Tibial artery (tissue), 4 donors: ENCODE measurements at regions of chr7 and their contacts with region 1.

Region 1: DNA sequence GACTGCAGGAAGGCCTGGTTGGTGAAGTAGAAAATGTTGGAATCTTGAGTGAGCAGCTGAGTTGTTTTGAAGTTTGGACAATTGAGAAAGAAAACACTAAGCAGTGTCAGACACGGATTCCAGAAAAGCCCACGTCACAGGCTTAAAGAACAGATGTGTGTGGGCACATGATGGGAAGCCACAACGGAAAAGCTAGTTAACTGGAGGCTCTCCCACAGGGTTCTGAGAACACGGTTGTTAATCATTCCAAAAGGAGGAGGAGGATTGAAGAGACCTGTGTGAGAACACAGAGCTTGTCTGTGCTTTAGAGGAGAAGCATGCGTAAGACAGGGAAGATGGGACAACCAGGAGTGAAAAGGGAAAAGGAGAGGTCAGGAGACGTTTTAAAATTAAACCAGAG is 42.6 kb downstream of the SHH start:
- DNase-seq: no peak
- H3K4me3 ChIP-seq: no peak overlapping the region
- H3K27ac ChIP-seq: no peak overlapping the region
- H3K4me1 ChIP-seq: no peaks in the 10 kb centered on the region
- H3K27me3 ChIP-seq: no peaks in the 10 kb centered on the region
- CTCF ChIP-seq: no peak

Region 2: GRCh38 chr7:155590215-155591018 is 179.3 kb before region 1 on chr7:
- intact Hi-C with region 1: loop called (anchors 5 kb)
- DNase-seq: peak in 1 of 2 donors; percentile 62
- H3K4me3 ChIP-seq: no peak overlapping the region
- H3K27ac ChIP-seq: no peak overlapping the region
- H3K4me1 ChIP-seq: no peaks in the 10 kb centered on the region
- H3K27me3 ChIP-seq: peaks cover 0 to 41% of the 10 kb centered on the region in 2 donors
- CTCF ChIP-seq: no peak